CD8-positive, alpha-beta T cell (primary cell): ENCODE measurements at regions of chr17 and their contacts with region 1.

Region 1: DNA sequence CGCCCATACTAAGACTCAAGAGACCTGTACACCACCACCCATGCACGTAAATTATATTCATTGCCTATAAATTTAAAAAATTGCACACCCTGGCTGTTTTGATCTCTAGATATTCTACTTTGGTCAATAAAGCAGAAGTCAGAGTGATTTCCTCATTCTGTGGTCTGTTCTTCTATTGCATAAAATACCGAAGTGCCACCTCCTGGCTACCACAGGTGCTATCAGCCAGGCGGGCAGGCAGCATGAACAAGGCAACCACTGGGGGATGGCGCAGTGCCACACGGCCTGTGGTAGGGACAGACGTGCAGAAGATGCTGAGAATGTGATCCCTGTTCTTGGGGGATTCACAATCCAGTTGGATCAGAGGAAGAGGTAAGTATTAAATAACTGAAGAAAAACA is 122.3 kb downstream of the CDK5R1 start:
- DNase-seq: peak; percentile 49 to 86 (median 74)
- ATAC-seq: peak; percentile 100
- H3K4me3 ChIP-seq: no peak overlapping the region
- H3K4me3 Mint-ChIP-seq: no peak overlapping the region
- H3K27ac ChIP-seq: no peak overlapping the region
- H3K27ac Mint-ChIP-seq: no peak overlapping the region
- H3K4me1 ChIP-seq: peaks cover 8% of the 10 kb centered on the region
- H3K4me1 Mint-ChIP-seq: peaks cover 6% of the 10 kb centered on the region
- H3K27me3 ChIP-seq: no peaks in the 10 kb centered on the region
- H3K27me3 Mint-ChIP-seq: no peaks in the 10 kb centered on the region
- CTCF ChIP-seq: peak; percentile 64

Region 2: DNA sequence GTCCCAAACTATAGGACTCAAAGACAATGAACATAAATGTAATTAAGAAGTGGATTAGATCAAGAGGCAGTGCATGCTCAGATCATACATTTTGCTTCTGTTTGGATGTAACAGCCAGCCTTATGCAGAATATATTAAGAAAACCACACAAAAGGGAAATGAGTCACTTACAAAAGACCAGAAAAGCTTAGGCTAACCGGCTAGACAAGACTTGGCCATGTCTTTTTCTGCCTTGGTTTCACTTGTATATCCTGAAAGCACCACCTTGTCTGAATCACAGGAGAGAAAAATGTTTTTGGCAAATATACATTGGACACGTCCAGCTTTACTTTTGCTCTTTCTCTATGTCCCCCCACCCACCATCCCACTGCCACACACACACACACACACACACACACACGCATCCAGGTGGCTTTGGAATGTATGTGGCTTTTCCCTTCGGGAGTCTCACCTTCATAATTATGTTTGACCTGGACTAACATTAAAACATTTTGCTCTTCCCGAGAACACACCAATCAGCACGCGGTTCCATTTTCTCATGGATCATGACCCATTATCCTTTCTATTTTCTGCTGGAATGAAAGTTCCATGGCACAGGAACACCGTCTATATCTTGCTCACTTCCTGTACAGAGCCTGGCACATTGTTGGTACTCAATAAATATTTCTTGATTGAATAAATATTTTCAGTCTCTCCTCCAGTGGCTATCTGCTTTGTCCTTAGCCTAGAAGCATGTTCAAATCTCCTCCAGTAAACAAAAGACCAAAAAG is 57.7 kb before region 1 on chr17:
- CTCF ChIA-PET with region 1: no interaction called
- POLR2A ChIA-PET with region 1: no interaction called
- intact Hi-C with region 1: loop called in 1 of 2 experiments (anchors 5 kb)
- DNase-seq: peak in 2 of 9 experiments; percentile 37 to 47
- ATAC-seq: peak; percentile 51
- H3K4me3 ChIP-seq: no peak overlapping the region
- H3K4me3 Mint-ChIP-seq: no peak overlapping the region
- H3K27ac ChIP-seq: no peak overlapping the region
- H3K27ac Mint-ChIP-seq: no peak overlapping the region
- H3K4me1 ChIP-seq: peaks cover 36% of the 10 kb centered on the region
- H3K4me1 Mint-ChIP-seq: peaks cover 43% of the 10 kb centered on the region
- H3K27me3 ChIP-seq: no peaks in the 10 kb centered on the region
- H3K27me3 Mint-ChIP-seq: no peaks in the 10 kb centered on the region
- CTCF ChIP-seq: no peak